ENCODE measurements at regions of chr4 and their contacts with region 1.

Region 1: GRCh38 chr4:27010334-27010940 is 149.8 kb downstream of the STIM2 start:
- DNase-seq: peak; percentile 37 to 42
- H3K4me3 ChIP-seq: no peak overlapping the region
- H3K27ac ChIP-seq: no peak overlapping the region
- H3K4me1 ChIP-seq: peaks cover 17% of the 10 kb centered on the region
- H3K27me3 ChIP-seq: no peaks in the 10 kb centered on the region
- CTCF ChIP-seq: peak; percentile 81

Region 2: GRCh38 chr4:25351777-25352416 is 1658.5 kb before region 1 on chr4:
- CTCF ChIA-PET with region 1: no interaction called
- POLR2A ChIA-PET with region 1: no interaction called
- intact Hi-C with region 1: no loop called
- DNase-seq: no peak
- H3K4me3 ChIP-seq: no peak overlapping the region
- H3K27ac ChIP-seq: no peak overlapping the region
- H3K4me1 ChIP-seq: no peaks in the 10 kb centered on the region
- H3K27me3 ChIP-seq: no peaks in the 10 kb centered on the region
- CTCF ChIP-seq: no peak

Region 3: DNA sequence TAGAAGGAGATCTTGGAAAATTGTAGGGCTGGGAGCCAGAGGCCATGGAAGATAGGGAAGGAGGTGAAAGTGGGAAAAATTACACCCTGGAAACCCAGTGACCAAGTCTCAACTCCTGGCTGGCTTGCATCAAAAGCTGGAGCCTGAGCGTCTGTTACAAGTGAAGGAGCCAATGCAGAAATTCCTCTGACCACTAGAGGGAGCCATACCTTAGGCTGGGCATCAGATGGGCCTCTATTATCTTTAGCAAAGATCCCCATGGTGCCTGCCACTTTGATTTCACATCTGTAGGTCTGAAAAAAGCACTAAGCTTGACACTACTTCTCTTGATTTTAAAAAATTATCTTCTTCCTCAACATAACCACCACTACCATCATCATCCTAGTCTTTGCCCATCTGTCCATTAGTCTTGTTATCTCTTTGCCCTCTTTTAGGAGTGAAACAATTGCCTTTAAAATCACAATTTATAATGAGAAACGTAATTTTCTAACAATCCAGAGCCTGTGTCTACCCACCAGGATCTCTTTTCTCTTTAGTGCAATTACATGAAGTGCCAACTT is 1570.4 kb before region 1 on chr4:
- CTCF ChIA-PET with region 1: no interaction called
- POLR2A ChIA-PET with region 1: no interaction called
- intact Hi-C with region 1: loop called (anchors 10 kb)
- DNase-seq: peak in 1 of 2 experiments; percentile 45
- H3K4me3 ChIP-seq: no peak overlapping the region
- H3K27ac ChIP-seq: no peak overlapping the region
- H3K4me1 ChIP-seq: no peaks in the 10 kb centered on the region
- H3K27me3 ChIP-seq: no peaks in the 10 kb centered on the region
- CTCF ChIP-seq: peak; percentile 87

Region 4: DNA sequence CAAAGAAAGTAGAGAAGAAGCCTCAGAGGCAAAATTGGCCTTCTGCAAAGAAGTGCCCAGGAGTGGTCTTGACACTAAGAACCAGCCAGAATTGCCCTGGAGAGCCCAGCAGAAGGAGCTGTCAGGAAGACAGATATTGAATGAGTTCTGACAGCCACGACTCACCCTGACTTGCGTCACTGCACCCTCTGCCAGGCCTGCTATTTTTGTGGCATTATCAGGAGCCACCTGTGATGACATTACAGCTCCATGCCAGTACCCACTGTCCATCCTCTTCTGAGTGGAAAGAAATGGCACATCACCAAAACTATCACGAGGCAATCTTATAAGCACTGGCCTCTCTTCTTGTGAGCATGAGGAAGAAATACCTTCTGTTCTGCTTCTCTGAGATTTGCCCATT is 1028.7 kb before region 1 on chr4:
- CTCF ChIA-PET with region 1: no interaction called
- POLR2A ChIA-PET with region 1: no interaction called
- intact Hi-C with region 1: loop called (anchors 10 kb)
- DNase-seq: no peak
- H3K4me3 ChIP-seq: no peak overlapping the region
- H3K27ac ChIP-seq: no peak overlapping the region
- H3K4me1 ChIP-seq: no peaks in the 10 kb centered on the region
- H3K27me3 ChIP-seq: no peaks in the 10 kb centered on the region
- CTCF ChIP-seq: no peak

Region 5: GRCh38 chr4:26424838-26425237 is 585.6 kb before region 1 on chr4:
- CTCF ChIA-PET with region 1: no interaction called
- POLR2A ChIA-PET with region 1: no interaction called
- intact Hi-C with region 1: loop called (anchors 5 kb)
- DNase-seq: no peak
- H3K4me3 ChIP-seq: no peak overlapping the region
- H3K27ac ChIP-seq: no peak overlapping the region
- H3K4me1 ChIP-seq: no peaks in the 10 kb centered on the region
- H3K27me3 ChIP-seq: no peaks in the 10 kb centered on the region
- CTCF ChIP-seq: no peak; the same call in 1 of the 2 replicates

Region 6: GRCh38 chr4:27081675-27082586 is 71.5 kb after region 1 on chr4:
- CTCF ChIA-PET with region 1: no interaction called
- POLR2A ChIA-PET with region 1: no interaction called
- intact Hi-C with region 1: no loop called
- DNase-seq: no peak
- H3K4me3 ChIP-seq: no peak overlapping the region
- H3K27ac ChIP-seq: no peak overlapping the region
- H3K4me1 ChIP-seq: no peaks in the 10 kb centered on the region
- H3K27me3 ChIP-seq: no peaks in the 10 kb centered on the region
- CTCF ChIP-seq: no peak

Region 7: DNA sequence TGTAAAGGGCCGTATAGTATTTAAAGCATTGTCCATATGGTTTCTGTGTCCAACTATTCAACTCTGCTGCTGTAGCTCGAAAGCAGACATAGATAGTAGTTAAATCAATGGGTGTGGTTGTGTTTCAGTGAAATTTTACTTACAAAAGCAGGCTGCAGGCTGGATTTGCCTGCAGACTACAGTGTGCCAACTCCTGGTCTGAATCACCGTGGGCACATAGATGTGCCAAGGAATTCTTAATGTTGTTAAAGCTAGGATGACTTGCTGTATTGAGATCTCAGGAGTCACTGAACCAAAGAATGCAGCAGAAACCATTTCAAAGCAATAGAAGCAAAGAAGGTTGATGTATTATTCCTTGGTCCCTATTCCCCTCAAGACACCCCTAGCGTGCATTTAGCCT is 229.2 kb after region 1 on chr4:
- CTCF ChIA-PET with region 1: no interaction called
- POLR2A ChIA-PET with region 1: no interaction called
- intact Hi-C with region 1: no loop called
- DNase-seq: no peak
- H3K4me3 ChIP-seq: no peak overlapping the region
- H3K27ac ChIP-seq: no peak overlapping the region
- H3K4me1 ChIP-seq: no peaks in the 10 kb centered on the region
- H3K27me3 ChIP-seq: no peaks in the 10 kb centered on the region
- CTCF ChIP-seq: no peak

Measured in PC-9 (cell line).